Heart right ventricle (tissue), 16 donors: ENCODE measurements at regions of chr19 and their contacts with region 1.

Region 1: DNA sequence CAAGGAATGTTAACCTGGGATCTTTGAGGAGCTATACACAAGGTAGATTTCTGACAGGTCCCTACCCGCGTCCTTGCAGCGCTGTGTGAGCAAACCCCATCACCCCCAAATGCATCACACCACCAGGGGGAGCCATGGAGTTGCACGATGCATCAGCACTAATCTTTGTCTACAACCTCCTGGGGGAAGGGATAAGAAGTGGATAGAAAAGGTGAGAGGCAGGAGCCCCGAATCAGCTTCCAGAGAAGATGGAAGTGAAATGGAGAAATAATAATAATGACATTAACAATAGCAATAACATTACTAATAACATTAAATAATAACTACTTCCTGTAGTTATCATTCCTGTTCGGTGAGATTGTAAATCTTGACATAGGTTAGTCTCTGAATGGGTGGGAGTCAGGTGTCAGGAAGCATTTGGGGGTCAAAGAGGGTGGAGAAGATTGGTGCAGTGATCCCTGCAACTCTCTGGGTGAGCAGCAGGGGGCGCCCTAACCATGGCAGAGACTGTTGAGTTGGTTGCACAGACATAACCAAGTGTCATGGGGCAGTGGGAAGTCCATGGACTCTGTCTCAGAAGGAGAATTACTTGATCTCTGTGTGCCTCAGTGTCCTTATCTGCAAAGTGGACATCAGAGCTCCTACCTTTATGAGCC is 16.5 kb downstream of the SIGLEC7 start:
- DNase-seq: peak in 1 of 2 donors; percentile 55
- ATAC-seq: peak in 2 of 8 donors; percentile 47 to 62
- H3K4me3 ChIP-seq: no peak overlapping the region
- H3K27ac ChIP-seq: peak overlapping the region in 1 of 10 donors; percentile 52
- H3K4me1 ChIP-seq: peaks cover 0 to 9% (median 0%) of the 10 kb centered on the region in 9 donors
- H3K27me3 ChIP-seq: peaks cover 0 to 19% (median 6%) of the 10 kb centered on the region in 7 donors
- CTCF ChIP-seq: peak in 8 of 9 donors; percentile 38 to 73 (median 50)

Region 2: DNA sequence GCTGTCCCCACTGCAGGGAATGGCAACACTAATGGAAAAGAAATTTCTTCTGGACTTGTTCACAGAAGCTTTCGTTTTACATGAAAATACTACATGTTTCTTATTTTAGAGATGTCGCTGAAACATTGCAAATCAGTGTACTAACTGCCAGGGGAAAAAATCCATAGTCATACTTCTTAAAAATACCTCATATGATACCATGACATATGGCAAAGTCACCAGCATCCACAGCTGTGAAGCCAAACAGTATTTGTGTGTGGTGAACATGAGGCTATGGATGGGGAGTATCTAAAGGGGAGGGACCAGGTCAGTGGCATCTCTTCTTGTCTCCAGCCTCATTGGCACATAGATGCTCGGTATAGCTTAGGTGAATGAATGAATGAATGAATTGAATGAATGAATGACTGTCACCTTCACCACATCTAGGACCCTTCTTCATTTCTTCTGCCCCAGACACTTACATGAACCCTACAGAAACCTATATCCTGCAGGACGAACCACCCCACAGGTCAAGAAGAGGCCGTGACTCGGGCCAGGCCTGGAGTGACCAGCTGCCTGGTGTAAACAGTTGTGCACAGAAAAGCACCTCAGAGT is 51.7 kb after region 1 on chr19:
- intact Hi-C with region 1: no loop called
- DNase-seq: no peak
- ATAC-seq: no peak
- H3K4me3 ChIP-seq: no peak overlapping the region
- H3K27ac ChIP-seq: peak overlapping the region in 1 of 10 donors; percentile 75
- H3K4me1 ChIP-seq: peaks cover 0 to 16% (median 0%) of the 10 kb centered on the region in 9 donors
- H3K27me3 ChIP-seq: peaks cover 0 to 9% (median 3%) of the 10 kb centered on the region in 7 donors
- CTCF ChIP-seq: no peak

Region 3: DNA sequence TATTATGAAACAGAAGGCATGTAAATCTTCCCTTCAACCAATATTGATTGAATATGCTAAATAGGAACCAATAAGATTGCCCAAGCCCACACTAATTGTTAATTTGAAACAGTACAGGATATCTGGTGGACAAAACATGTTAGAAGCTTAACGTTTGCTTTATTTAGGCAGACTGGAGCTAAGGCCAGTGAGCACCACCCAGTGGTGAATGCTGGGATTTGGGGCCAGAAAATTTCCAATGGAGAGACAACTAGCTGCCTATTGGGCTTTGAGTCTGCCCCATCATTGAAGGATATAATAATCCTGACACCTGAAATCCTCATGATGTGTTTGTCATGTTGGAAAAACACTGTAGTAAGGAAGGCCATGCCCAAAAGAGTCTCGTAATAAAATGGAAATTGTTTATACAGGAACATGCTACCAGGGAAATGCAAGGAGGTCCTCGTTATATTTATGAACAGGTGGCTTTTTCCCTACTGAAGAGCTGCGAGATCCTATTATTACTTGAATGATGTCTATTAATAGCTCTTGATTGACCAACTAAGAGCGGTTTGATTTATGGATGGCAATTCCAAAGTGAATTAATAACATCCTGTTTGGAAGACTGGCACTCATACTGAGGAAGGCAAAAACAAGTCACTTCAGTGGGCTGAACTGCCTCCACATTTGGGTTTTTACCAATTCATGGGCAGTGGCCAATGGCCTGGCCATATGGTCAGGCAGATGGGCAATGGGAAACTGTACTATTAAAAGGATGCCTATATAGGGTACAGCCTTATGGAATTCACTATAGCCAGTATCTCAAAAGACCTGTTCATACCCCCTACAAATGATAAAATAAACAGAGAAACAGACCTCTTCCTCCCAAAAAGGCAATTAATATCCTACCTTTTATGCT is 101.0 kb after region 1 on chr19:
- intact Hi-C with region 1: loop called in 1 of 10 experiments (anchors 10 kb)
- DNase-seq: peak in 1 of 2 donors; percentile 15
- ATAC-seq: no peak
- H3K4me3 ChIP-seq: no peak overlapping the region
- H3K27ac ChIP-seq: no peak overlapping the region
- H3K4me1 ChIP-seq: peaks cover 0 to 8% (median 0%) of the 10 kb centered on the region in 9 donors
- H3K27me3 ChIP-seq: peaks cover 0 to 69% (median 37%) of the 10 kb centered on the region in 7 donors
- CTCF ChIP-seq: peak in 7 of 9 donors; percentile 46 to 70 (median 57)

Region 4: GRCh38 chr19:51703575-51704515 is 545.2 kb after region 1 on chr19:
- intact Hi-C with region 1: no loop called
- DNase-seq: peak; percentile 97
- ATAC-seq: peak; percentile 95 to 97 (median 96)
- H3K4me3 ChIP-seq: peak overlapping the region; percentile 23 to 78 (median 60)
- H3K27ac ChIP-seq: peak overlapping the region; percentile 56 to 97 (median 90)
- H3K4me1 ChIP-seq: peaks cover 0 to 37% (median 28%) of the 10 kb centered on the region in 9 donors
- H3K27me3 ChIP-seq: peaks cover 0 to 11% (median 0%) of the 10 kb centered on the region in 7 donors
- CTCF ChIP-seq: peak in 8 of 9 donors; percentile 10 to 77 (median 52)